A673 (cell line): ENCODE measurements at regions of chr19 and their contacts with region 1.

Region 1: DNA sequence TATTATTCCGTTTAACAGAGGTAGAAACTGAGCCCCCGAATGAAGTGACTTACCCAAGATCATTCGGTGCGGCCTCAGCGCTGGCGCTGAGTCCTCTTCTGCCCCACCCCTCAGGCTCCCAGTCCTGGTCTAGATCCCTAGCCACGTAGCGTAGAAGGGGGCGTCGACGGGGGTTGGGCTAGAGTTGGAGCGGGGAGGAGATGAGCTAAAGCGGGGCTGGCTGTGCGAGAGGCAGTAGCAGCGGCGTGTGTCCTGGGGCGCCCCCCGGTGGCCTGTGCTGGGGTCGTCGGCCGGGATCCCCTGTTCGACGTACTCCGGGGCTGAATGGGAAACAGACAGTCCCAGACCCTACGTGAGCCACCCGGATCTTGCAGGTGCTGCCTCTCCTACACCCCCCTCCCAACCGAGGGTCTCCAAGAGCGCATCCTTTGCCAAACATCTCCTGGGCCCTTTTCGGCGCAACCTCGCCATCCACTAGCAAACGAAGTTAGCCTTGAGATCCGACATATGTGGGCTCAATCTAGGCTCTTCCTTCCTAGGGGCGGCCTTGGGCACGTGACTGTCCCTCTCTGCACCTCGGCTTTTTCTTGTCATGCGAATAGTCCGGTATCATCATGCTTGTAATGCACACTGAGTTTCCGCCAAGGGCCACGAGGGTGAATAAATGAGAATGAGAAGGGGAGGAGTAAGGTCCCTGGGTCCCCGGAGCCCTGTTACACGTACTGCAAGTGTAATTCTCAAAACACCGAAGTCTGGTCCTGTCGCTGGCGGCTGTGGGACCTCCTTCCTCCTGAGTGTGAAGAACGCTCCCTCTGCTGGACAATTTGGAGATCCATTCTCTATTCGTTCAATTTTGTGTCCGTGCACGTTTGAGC is 47.7 kb downstream of the CYP4F22 start:
- DNase-seq: peak; percentile 99
- H3K4me3 ChIP-seq: peak overlapping the region; percentile 34
- H3K27ac ChIP-seq: peak overlapping the region; percentile 57
- H3K4me1 ChIP-seq: peaks cover 9% of the 10 kb centered on the region
- H3K27me3 ChIP-seq: no peaks in the 10 kb centered on the region
- CTCF ChIP-seq: peak; percentile 89

Region 2: DNA sequence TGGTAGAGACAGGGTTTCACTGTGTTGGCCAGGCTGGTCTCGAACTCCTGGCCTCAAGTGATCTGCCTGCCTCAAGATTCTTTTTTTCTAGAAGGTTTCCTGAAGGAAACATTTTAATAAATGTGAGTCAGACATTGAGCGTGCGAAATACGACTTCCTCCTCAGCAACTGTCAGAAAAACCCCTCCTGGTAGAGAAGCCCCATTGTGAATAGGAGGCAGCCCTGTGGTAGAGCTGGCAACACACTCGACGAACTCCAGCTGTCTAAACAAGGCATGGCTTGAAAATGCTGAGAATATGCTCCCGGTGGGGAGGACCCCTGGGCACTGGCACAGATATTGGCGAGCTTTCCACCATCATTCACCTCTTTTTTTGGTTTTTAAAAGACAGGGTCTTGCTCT is 856.4 kb before region 1 on chr19:
- CTCF ChIA-PET with region 1: interaction called, 12 read pairs
- POLR2A ChIA-PET with region 1: no interaction called
- intact Hi-C with region 1: no loop called
- DNase-seq: no peak
- H3K4me3 ChIP-seq: no peak overlapping the region
- H3K27ac ChIP-seq: no peak overlapping the region
- H3K4me1 ChIP-seq: no peaks in the 10 kb centered on the region
- H3K27me3 ChIP-seq: no peaks in the 10 kb centered on the region
- CTCF ChIP-seq: no peak

Region 3: GRCh38 chr19:15177269-15178116 is 378.5 kb before region 1 on chr19:
- CTCF ChIA-PET with region 1: interaction called, 7 read pairs
- POLR2A ChIA-PET with region 1: no interaction called
- intact Hi-C with region 1: loop called (anchors 1 kb)
- DNase-seq: peak; percentile 89
- H3K4me3 ChIP-seq: peak overlapping the region; percentile 41
- H3K27ac ChIP-seq: no peak overlapping the region
- H3K4me1 ChIP-seq: peaks cover 17% of the 10 kb centered on the region
- H3K27me3 ChIP-seq: no peaks in the 10 kb centered on the region
- CTCF ChIP-seq: peak; percentile 85

Region 4: GRCh38 chr19:15379083-15379995 is 176.7 kb before region 1 on chr19 and contains the start of gene AKAP8:
- CTCF ChIA-PET with region 1: interaction called, 3 read pairs
- POLR2A ChIA-PET with region 1: no interaction called
- intact Hi-C with region 1: loop called (anchors 2 kb)
- DNase-seq: peak; percentile 99
- H3K4me3 ChIP-seq: peak within 1 kb of the TSS; percentile 80
- H3K27ac ChIP-seq: peak within 1 kb of the TSS; percentile 99
- H3K4me1 ChIP-seq: peaks cover 11% of the 10 kb centered on the region
- H3K27me3 ChIP-seq: no peaks in the 10 kb centered on the region
- CTCF ChIP-seq: no peak
- total RNA-seq, gene AKAP8: 46.8 and 48.4 TPM in 2 replicates

Region 5: GRCh38 chr19:15508035-15508710 is 47.8 kb before region 1 on chr19 and contains the start of gene CYP4F22:
- CTCF ChIA-PET with region 1: no interaction called
- POLR2A ChIA-PET with region 1: no interaction called
- intact Hi-C with region 1: loop called (anchors 5 kb)
- DNase-seq: peak; percentile 65
- H3K4me3 ChIP-seq: peak within 1 kb of the TSS; percentile 71
- H3K27ac ChIP-seq: peak within 1 kb of the TSS; percentile 81
- H3K4me1 ChIP-seq: peaks cover 35% of the 10 kb centered on the region
- H3K27me3 ChIP-seq: no peaks in the 10 kb centered on the region
- CTCF ChIP-seq: no peak
- total RNA-seq, gene CYP4F22: 78.3 and 79.7 TPM in 2 replicates